AG04450 (cell line): ENCODE measurements at regions of chr20 and their contacts with region 1.

Region 1: DNA sequence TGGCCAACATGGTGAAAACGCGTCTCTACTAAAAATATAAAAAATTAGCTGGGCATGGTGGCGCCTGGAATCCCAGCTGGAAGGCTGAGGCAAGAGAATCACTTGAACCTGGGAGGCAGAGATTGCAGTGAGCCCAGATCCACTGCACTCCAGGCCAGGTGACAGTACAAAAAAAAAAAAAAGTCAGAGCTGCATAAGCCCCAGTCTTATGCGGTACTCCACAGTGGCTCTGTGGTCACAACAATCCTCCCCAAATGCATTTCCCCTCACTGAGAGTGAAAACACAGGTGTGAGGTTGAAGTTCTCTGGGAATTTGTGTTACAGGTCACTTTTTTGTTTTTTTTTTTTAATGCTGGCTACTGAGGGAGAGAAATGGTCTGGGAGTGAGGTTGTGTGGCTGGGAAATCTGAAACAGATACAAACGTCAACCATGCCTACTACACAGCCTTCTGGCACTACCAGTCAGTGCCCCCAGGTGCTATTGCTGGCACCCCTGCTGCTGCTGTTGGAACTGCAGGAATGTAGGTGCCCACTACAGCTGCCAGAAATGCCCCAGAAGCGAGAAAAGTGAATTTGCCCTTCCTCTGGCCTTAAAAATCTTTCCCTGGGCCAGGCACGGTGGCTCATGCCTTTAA is 5.7 kb downstream of the MRPS26 start:
- DNase-seq: no peak
- H3K4me3 ChIP-seq: no peak overlapping the region
- H3K27ac ChIP-seq: no peak overlapping the region
- H3K27me3 ChIP-seq: no peaks in the 10 kb centered on the region
- CTCF ChIP-seq: no peak

Region 2: GRCh38 chr20:3071610-3072529 is 20.4 kb after region 1 on chr20 and contains the start of gene OXT:
- CTCF ChIA-PET with region 1: interaction called, 20 read pairs
- POLR2A ChIA-PET with region 1: interaction called, 5 read pairs
- DNase-seq: no peak
- H3K4me3 ChIP-seq: peak within 1 kb of the TSS; percentile 48; the same call in 1 of the 2 replicates
- H3K27ac ChIP-seq: no peak within 1 kb of the TSS
- H3K27me3 ChIP-seq: peaks cover 31% of the 10 kb centered on the region
- CTCF ChIP-seq: no peak
- polyA plus RNA-seq, gene OXT: not detected in 2 replicates

Region 3: DNA sequence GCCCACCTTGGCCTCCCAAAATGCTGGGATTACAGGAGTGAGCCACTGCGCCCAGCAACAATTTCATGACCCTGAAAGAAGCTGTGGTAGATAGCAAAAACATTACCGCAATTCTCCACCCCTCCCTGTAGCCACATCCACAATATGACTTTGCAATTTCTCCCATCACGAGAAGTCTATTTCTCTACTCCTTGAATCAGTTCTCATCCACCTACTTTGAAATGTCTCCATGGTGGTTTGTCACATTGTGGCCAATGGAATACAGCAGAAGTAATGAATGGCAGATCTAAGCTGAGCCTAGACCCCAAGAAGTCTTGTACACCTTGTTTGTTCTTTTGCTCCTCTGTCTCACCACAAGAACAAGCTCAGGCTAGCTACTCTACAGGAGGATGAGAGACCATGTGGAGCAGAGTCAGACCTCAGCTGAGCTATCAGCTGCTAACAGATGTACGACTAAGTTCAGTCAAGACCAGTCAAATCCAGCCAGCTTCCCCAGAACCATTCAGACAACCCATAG is 26.2 kb after region 1 on chr20:
- CTCF ChIA-PET with region 1: interaction called, 20 read pairs
- POLR2A ChIA-PET with region 1: no interaction called
- DNase-seq: no peak
- H3K4me3 ChIP-seq: no peak overlapping the region
- H3K27ac ChIP-seq: no peak overlapping the region
- H3K27me3 ChIP-seq: peaks cover 42% of the 10 kb centered on the region
- CTCF ChIP-seq: no peak

Region 4: DNA sequence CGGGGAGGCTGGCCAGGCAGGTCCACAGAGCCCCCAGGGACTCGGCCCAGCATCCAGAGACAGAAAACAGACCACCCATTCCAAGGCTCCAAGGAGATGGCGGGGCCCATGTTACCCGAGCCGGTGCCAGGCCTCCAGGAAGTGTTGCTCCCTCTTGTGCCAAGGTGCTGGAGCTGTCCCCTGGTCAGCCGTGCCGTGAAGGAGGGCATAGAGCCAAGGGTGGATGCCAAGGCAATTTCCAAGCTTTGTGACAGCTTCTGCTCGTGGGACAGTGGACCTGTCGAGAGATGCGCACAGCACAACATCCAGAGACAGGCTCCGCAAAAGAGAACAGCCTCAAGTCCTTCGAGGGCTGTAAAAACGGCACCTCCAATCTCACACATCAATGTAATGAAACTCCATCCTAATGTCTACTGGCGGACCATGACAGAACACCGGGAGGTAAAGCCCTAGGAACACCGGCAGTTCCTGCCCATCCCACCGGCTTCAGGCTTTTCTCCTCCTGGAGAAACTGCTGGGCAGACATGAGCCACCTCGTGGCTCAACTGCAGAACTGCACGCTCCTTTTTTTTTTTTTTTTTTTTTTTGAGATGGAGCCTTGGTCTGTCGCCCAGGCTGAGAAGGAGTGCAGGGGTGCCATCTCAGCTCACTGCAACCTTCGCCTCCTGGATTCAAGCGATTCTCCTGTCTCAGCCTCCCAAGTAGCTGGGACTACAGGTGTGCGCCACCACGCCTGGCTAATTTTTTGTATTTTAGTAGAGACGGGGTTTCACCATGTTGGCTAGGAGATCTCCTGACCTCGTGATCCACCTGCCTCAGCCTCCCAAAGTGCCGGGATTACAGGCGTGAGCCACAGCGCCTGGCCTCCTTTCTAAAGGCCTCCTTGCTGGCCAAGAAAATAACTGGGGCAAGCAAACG is 63.9 kb after region 1 on chr20:
- CTCF ChIA-PET with region 1: interaction called, 61 read pairs
- POLR2A ChIA-PET with region 1: interaction called, 3 read pairs
- DNase-seq: peak; percentile 23
- H3K4me3 ChIP-seq: no peak overlapping the region
- H3K27ac ChIP-seq: no peak overlapping the region
- H3K27me3 ChIP-seq: no peaks in the 10 kb centered on the region
- CTCF ChIP-seq: peak; percentile 83